GM10248 (cell line): ENCODE measurements at regions of chr7 and their contacts with region 1.

Region 1: DNA sequence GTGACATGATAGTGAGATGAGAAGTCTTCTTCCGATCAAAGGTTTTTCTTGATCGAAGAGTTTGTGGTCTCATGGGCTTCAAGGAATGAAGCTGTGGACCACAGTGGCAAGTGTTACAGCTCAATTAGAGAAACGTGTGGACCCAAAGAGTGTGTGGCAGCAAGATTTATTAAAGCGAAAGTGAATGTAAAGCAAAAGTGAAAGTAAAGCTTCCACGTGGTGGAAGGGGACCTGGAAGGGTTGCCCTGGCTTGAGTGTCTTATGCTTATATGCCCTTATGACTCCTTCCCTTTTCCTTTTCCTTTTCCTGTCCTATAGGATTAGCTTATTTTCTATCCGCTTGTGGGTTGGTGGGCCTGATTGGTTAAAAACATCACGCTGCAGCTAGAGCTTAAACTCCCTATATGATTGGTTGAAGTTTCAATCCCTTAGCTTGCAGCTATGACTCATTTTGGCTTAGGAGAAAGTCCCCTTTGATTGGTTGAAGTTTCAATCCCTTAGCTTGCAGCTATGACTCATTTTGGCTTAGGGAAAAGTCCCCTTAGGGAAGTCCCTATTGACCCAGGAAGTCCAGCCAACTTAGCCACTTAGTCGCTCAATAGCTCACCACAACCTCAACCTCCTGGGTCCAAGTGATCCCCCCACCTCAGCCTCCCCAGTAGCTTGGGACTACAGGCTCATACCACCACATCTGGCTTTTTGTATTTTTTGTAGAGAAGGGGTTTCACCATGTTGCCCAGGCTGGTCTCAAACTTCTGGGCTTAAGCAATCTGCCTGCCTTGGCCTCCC is 34.7 kb downstream of the MRPS24 start:
- DNase-seq: no peak
- CTCF ChIP-seq: no peak

Region 2: DNA sequence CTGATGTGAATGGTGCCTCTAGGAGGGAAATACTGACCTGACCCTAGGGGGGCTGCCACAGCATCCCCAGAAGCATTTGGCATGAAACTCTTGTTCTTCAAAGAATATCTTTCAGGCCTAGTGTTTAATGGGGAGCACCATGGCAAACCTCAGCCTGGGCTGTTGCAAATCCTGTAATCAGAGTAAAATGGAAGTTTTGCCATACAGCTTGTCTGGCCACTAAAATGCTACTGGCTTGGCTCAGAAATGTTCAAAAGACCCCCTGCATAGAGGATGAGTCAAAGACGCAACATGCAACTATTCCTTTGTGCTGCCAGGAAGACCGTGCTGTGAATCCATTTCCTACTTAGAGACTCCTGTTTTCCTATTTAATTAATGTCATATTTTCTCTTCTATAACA is 695.5 kb before region 1 on chr7:
- CTCF ChIA-PET with region 1: no interaction called
- POLR2A ChIA-PET with region 1: no interaction called
- DNase-seq: no peak
- CTCF ChIP-seq: no peak

Region 3: GRCh38 chr7:43454936-43455518 is 379.6 kb before region 1 on chr7:
- CTCF ChIA-PET with region 1: interaction called, 22 read pairs
- POLR2A ChIA-PET with region 1: no interaction called
- DNase-seq: peak; percentile 66
- CTCF ChIP-seq: peak; percentile 52

Region 4: GRCh38 chr7:43721193-43721806 is 113.4 kb before region 1 on chr7:
- CTCF ChIA-PET with region 1: interaction called, 11 read pairs
- POLR2A ChIA-PET with region 1: no interaction called
- DNase-seq: no peak
- CTCF ChIP-seq: peak; percentile 48

Region 5: DNA sequence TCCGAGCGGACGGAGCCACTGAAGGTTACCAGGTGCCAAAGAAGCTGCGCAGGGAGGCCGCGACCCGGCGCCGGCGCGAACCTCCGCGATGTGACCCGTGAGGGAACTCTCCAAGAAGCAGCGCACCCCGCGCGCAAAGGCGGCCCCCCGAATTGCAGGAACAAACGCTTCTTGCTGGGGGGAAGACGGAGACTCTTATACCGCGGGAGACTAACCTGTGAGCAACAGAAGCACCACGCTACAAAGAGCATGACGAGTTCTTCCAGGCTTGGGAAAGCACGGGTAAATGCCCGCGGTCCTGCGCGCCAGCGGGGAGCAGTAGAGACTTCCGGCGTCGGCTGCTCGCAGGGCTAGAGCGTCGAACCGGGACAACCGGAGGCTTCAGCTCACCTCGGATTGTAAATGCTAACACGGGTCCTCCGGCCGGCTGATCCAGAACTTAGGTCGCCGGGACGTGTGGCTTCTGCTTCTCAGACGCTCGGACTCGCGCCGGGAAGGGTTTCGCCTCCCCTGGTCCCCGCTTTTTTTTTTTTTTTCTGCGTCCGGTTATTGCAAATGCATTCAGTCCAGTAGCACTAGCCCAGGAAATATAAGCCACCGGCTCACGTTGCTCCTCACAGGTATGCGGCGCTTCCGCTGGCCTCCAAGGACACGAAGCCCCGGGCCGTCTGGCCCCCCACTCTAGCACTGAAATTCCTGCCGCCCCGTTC is 105.3 kb before region 1 on chr7 and contains the start of gene COA1:
- CTCF ChIA-PET with region 1: interaction called, 11 read pairs
- POLR2A ChIA-PET with region 1: no interaction called
- DNase-seq: peak; percentile 83
- CTCF ChIP-seq: no peak

Region 6: GRCh38 chr7:43784030-43785001 is 50.3 kb before region 1 on chr7:
- CTCF ChIA-PET with region 1: interaction called, 13 read pairs
- POLR2A ChIA-PET with region 1: no interaction called
- DNase-seq: peak; percentile 61
- CTCF ChIP-seq: no peak

Region 7: GRCh38 chr7:43850348-43851116 is 15.9 kb after region 1 on chr7:
- CTCF ChIA-PET with region 1: interaction called, 46 read pairs
- POLR2A ChIA-PET with region 1: no interaction called
- DNase-seq: no peak
- CTCF ChIP-seq: no peak

Region 8: DNA sequence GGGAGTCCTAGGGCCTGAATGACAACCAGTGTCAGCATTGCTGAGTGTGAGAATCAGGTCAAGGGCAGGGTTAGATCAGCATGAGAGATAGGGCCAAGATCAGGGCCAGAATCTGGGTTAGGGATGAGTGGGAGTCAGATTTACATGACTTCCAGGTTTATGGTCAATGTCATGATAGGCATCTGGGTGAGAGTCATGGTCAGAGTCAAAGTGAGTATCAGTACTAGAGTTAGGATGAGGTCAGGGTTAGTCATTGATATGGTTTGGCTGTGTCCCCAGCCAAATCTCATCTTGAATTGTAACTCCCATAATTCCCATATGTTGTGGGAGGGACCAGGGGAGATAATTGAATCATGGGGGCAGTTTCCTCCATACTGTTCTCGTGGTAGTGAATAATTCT is 22.3 kb after region 1 on chr7:
- CTCF ChIA-PET with region 1: interaction called, 12 read pairs
- POLR2A ChIA-PET with region 1: no interaction called
- DNase-seq: no peak
- CTCF ChIP-seq: no peak

Region 9: GRCh38 chr7:44123190-44124003 is 288.7 kb after region 1 on chr7 and contains the start of gene POLD2:
- CTCF ChIA-PET with region 1: no interaction called
- POLR2A ChIA-PET with region 1: no interaction called
- DNase-seq: peak; percentile 100
- CTCF ChIP-seq: no peak